OCI-LY7 (cell line): ENCODE measurements at regions of chr2 and their contacts with region 1.

Region 1: GRCh38 chr2:100416935-100417710 is at the start of gene CHST10:
- DNase-seq: peak; percentile 78
- H3K4me3 ChIP-seq: peak within 1 kb of the TSS; percentile 93
- H3K27ac ChIP-seq: peak within 1 kb of the TSS; percentile 18
- H3K4me1 ChIP-seq: peaks cover 14% of the 10 kb centered on the region
- CTCF ChIP-seq: no peak
- total RNA-seq, gene CHST10: 12.8 and 19.1 TPM in 2 replicates

Region 2: DNA sequence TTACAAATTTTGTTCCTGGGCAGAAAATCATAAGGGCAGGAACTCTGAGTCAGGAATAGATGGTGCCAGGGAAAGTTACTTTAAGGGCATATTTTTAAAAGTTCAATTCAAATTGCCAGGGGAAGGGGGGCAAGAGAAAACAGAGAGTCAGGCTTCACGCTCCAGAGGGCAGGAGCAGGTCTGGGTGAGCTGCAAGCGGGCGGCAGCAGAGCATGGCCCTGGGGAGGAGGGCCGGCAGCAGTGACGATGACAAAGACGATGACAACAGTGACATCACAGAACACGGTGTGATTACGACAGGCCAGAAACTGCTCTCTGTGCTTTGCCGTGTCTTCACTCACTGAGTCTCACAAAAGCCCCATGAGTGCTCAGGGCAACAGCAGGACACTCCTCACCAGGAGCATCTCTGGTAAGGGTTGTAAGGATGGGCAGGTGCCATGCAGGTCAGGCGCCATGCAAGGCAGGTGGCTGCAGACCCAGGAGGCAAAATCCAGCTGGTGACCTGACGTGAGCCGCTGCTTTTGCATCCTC is 22.9 kb before region 1 on chr2:
- CTCF ChIA-PET with region 1: interaction called, 3 read pairs
- POLR2A ChIA-PET with region 1: interaction called, 5 read pairs
- intact Hi-C with region 1: loop called (anchors 1 kb)
- DNase-seq: peak; percentile 78
- H3K4me3 ChIP-seq: peak overlapping the region; percentile 13
- H3K27ac ChIP-seq: peak overlapping the region; percentile 40
- H3K4me1 ChIP-seq: peaks cover 27% of the 10 kb centered on the region
- CTCF ChIP-seq: no peak

Region 3: GRCh38 chr2:100407108-100407507 is 10.0 kb before region 1 on chr2:
- CTCF ChIA-PET with region 1: no interaction called
- POLR2A ChIA-PET with region 1: no interaction called
- intact Hi-C with region 1: no loop called
- DNase-seq: no peak
- H3K4me3 ChIP-seq: no peak overlapping the region
- H3K27ac ChIP-seq: no peak overlapping the region
- H3K4me1 ChIP-seq: no peaks in the 10 kb centered on the region
- CTCF ChIP-seq: no peak

Region 4: DNA sequence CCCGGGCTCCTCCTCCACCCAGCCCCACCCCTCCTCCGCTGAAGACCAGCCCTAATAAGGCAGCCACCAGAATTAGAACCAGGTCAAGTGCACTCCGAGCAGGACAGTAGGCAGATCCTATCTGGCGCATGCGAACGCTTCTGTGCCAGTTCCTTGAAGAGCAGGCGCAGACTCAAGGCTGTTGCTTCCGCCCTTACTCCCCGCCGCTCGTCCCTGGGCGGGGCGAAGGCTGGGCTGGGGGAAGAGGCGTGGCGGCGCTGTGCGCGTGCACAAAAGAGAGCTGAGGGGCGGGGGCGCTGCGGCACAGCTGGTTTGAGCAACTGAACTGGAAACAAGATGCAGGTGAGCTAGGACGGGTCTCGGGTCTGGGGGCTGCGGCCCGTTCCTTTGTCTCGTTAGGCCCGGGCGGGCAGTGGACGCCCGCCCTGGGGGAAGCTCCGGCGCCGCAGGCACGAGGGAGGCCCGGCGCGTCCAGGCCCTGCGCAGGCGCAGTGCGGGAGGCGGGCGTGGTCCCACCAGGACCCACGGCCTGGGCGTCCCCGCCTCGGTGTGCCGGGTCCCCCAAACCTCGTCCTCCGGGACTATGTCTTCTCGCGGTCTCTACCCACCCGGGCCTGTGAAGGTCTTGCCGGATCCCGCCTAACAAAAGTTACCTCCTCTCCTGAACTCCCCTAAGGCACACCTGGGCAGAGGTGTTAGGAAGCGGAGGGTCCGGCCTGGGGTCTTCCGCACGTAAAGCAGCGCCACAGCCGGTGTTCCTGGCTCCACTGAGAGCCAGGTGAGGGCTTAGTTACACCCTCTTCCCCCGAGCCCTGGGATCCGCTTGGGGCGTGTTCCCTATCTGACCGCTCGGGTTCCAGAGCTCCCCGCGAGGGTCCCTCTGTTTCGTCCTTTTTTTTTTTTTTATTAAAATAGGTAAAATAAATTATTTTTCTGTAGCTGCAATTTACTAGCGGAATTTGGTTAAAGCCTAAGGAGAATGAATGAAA is 145.9 kb after region 1 on chr2 and contains the start of gene PDCL3:
- CTCF ChIA-PET with region 1: no interaction called
- POLR2A ChIA-PET with region 1: interaction called, 6 read pairs
- intact Hi-C with region 1: loop called (anchors 1 kb)
- DNase-seq: peak; percentile 98
- H3K4me3 ChIP-seq: peak within 1 kb of the TSS; percentile 79
- H3K27ac ChIP-seq: peak within 1 kb of the TSS; percentile 79
- H3K4me1 ChIP-seq: peaks cover 19% of the 10 kb centered on the region
- CTCF ChIP-seq: 0 out of 2 replicates have a peak, but pooled peaks have one; percentile 3
- total RNA-seq, gene PDCL3: 10.6 and 12.3 TPM in 2 replicates